ENCODE measurements at regions of chr5 and their contacts with region 1.

Region 1: GRCh38 chr5:107118184-107119019 is 552.3 kb downstream of the EFNA5 start:
- DNase-seq: no peak
- ATAC-seq: no peak
- H3K4me3 ChIP-seq: no peak overlapping the region
- H3K27ac ChIP-seq: no peak overlapping the region
- H3K4me1 ChIP-seq: no peaks in the 10 kb centered on the region
- H3K27me3 ChIP-seq: no peaks in the 10 kb centered on the region
- CTCF ChIP-seq: no peak

Region 2: DNA sequence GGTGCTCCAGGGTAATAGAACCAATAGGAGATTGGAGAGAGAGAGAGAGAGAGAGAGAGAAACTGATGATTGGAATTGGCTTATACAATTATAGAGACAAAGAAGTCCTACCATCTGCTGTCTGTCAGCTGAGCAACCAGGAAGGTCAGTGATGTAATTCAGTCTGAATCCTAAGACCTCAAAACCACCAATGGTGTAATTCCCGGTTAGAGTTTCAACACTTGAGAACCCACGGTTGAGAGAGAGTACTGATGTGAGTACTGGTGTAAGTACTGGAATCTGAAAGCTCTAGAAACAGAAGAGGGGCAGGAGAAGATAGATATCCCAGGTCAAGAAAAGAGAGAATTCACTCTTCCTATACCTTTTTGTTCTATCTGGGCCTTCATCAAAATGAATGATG is 223.4 kb before region 1 on chr5:
- CTCF ChIA-PET with region 1: no interaction called
- POLR2A ChIA-PET with region 1: no interaction called
- in situ Hi-C with region 1: no loop called
- intact Hi-C with region 1: no loop called
- DNase-seq: no peak
- ATAC-seq: no peak
- H3K4me3 ChIP-seq: no peak overlapping the region
- H3K27ac ChIP-seq: no peak overlapping the region
- H3K4me1 ChIP-seq: no peaks in the 10 kb centered on the region
- H3K27me3 ChIP-seq: no peaks in the 10 kb centered on the region
- CTCF ChIP-seq: no peak

Region 3: DNA sequence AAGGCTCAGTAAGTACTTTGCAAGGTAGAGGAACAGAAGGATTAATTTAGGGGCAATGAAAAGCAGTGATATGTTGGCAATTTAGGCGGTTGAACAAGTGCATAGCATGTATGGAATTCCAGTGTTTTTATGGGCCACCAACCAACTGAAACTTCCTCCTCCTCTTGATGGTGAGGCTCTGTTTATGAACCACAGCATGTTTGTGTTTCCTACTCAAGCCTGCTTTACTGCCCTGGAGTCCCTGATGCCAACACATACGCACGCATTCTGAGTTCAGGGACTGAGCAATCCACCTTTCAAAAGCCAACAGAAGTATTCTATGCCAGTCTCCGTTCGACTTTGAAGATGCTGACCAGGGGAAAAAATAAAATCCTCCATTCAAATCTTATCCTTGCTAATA is 134.8 kb after region 1 on chr5:
- CTCF ChIA-PET with region 1: no interaction called
- POLR2A ChIA-PET with region 1: interaction called, 11 read pairs
- in situ Hi-C with region 1: no loop called
- intact Hi-C with region 1: no loop called
- DNase-seq: no peak
- ATAC-seq: no peak
- H3K4me3 ChIP-seq: no peak overlapping the region
- H3K27ac ChIP-seq: no peak overlapping the region
- H3K4me1 ChIP-seq: no peaks in the 10 kb centered on the region
- H3K27me3 ChIP-seq: no peaks in the 10 kb centered on the region
- CTCF ChIP-seq: no peak

Region 4: DNA sequence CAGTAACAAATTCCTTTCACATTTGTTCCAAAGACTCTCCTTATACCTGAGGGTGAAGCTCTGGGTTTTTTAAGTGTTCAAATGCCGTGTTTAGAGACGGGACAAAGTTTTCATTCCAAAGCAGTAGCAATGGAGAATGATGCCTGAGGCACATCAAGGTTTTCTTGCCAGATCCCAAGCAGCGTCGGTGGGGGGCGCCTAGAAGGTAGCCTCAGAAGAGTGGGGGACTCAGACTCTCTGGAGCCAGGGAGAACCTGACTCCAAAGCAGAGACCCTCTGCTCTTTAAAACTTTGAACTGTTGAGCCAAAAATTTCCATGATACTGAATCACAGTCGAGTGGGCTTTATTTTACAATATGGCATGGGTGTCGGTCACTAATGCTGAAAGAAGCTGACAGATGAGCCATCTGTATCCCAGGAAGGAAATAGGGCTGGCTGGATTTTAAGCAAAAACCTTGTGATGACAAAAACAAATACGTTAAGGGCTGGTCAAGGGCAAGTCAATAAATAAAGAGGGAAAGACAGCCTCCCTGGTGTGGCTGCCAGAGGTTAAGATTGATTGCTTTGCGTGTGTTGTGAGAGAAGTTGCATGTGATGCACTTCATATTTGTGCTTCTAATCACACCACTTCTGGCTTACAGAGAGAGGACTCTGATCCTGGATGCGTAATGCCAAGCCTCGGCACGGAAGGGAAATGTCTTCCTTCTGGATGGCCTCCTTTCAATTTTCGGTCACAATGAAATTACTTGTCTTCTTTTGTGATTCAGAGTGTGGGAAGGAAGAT is 713.4 kb after region 1 on chr5:
- CTCF ChIA-PET with region 1: no interaction called
- POLR2A ChIA-PET with region 1: no interaction called
- in situ Hi-C with region 1: no loop called
- intact Hi-C with region 1: no loop called
- DNase-seq: no peak
- ATAC-seq: no peak
- H3K4me3 ChIP-seq: no peak overlapping the region
- H3K27ac ChIP-seq: no peak overlapping the region
- H3K4me1 ChIP-seq: no peaks in the 10 kb centered on the region
- H3K27me3 ChIP-seq: peaks cover 2% of the 10 kb centered on the region; the same call in 1 of the 2 replicates
- CTCF ChIP-seq: no peak